Caki2 (cell line): ENCODE measurements at regions of chr17 and their contacts with region 1.

Region 1: GRCh38 chr17:82536512-82537201 is 17.1 kb downstream of the FOXK2 start:
- DNase-seq: no peak

Region 2: DNA sequence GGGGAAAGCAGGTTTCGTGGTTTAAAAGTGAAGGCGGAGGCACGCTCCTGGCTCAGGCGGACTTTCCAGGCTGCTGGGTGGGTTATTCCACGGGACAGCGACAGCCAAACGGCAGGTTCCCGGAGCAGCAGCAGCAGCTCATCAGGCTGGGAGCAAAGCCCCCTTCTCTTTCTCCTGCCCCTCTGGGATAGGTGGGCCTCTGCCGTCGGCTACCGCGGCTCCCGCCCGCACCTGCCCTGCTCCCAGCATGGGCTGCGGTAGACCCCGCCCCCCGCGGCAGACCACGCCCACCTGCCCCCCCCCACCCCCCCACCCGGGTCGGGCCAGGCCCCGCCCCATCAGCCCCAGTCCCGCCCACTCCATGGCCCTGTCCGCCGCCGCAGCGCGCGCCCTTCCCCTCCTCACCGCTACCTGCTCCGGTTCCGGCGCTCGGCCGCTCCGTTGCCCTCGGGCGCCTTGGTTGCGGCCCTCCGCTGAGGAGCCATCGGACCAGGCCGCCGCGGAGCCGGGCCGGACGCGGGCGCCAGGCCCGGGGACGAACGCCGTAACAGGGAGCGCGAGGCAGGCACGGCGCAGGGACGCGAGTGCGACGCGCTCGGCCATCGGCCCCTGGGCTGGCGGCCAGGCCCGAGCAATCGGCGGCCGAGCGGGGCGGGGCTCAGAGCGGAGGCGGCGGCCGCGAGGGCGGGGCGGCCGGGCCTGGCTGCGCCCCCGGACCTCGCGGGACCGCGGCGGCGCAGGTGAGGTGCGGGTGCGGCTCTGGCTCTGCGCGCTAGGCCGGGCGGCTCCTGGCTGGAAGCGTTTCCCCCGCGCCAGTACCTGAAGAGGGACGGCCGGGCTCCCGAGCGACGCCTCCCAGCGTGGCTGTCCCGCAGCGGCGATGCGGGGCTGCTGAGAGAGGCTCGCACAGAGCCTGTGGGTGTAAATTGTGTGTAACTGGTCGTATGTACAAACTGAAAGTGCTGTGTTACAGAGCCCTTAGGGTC is 118.4 kb before region 1 on chr17 and contains the starts of genes HEXD and OGFOD3:
- in situ Hi-C with region 1: loop called (anchors 10 kb)
- DNase-seq: peak; percentile 90
- total RNA-seq, gene HEXD: 11.6 and 22.3 TPM in 2 replicates
- total RNA-seq, gene OGFOD3: 35.9 and 68.3 TPM in 2 replicates